ENCODE measurements at regions of chr1 and their contacts with region 1.

Region 1: GRCh38 chr1:156689035-156689952 is 12.1 kb upstream of the NES start:
- DNase-seq: peak; percentile 63 to 84 (median 70)
- H3K4me3 ChIP-seq: no peak overlapping the region
- H3K4me3 Mint-ChIP-seq: peak overlapping the region in 2 of 7 donors; percentile 61 to 76
- H3K27ac ChIP-seq: no peak overlapping the region
- H3K27ac Mint-ChIP-seq: peak overlapping the region in 1 of 8 donors; percentile 83
- H3K4me1 ChIP-seq: peaks cover 7% of the 10 kb centered on the region
- H3K4me1 Mint-ChIP-seq: peaks cover 12 to 33% (median 18%) of the 10 kb centered on the region in 3 donors
- H3K27me3 ChIP-seq: peaks cover 25% of the 10 kb centered on the region
- H3K27me3 Mint-ChIP-seq: peaks cover 46 to 59% of the 10 kb centered on the region in 2 donors

Region 2: DNA sequence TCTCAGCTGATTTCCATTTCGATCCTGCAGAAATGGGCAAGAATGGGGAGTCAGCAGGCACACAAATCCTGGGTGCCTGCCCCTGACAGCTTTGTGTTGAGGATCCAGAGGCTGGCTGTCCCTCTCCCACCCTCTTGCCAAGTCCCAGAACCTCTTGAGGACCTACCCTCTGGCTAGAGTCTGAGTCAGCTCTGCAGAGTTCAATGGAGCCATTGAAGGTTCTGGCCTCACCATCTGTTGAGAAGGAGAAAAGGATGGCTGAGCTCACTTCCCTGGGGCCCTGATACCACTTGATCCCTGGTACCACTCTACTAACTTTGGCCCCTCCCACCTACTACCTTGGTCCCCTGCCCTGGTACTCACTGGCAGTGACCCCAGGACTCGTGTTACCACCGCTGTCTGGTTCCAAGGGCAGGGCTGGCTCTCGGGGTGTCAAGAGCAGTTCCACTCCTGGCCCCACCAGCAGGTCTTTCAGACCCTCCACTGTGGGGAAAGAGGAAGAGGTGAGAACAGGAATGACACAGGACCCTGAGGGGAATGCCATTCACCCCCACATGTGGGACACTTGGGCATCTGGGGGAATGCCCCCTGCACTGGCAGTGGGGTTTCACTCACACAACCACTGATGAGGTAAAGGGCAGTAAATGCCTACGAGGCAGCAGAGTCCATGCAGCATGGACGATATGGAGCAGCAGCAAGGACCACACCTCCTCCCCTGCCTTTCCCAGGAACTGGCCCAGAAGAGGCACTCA is 737.4 kb before region 1 on chr1:
- CTCF ChIA-PET with region 1: no interaction called
- POLR2A ChIA-PET with region 1: no interaction called
- DNase-seq: no peak
- H3K4me3 ChIP-seq: no peak overlapping the region
- H3K4me3 Mint-ChIP-seq: no peak overlapping the region
- H3K27ac ChIP-seq: no peak overlapping the region
- H3K27ac Mint-ChIP-seq: peak overlapping the region in 3 of 8 donors; percentile 6 to 56 (median 46)
- H3K4me1 ChIP-seq: peaks cover 4% of the 10 kb centered on the region
- H3K4me1 Mint-ChIP-seq: peaks cover 4 to 7% (median 5%) of the 10 kb centered on the region in 3 donors
- H3K27me3 ChIP-seq: no peaks in the 10 kb centered on the region
- H3K27me3 Mint-ChIP-seq: no peaks in the 10 kb centered on the region

Region 3: GRCh38 chr1:156659994-156660751 is 29.1 kb before region 1 on chr1:
- CTCF ChIA-PET with region 1: interaction called, 17 read pairs
- POLR2A ChIA-PET with region 1: no interaction called
- DNase-seq: peak; percentile 85 to 92 (median 88)
- H3K4me3 ChIP-seq: peak overlapping the region; percentile 36
- H3K4me3 Mint-ChIP-seq: peak overlapping the region; percentile 24 to 75 (median 62)
- H3K27ac ChIP-seq: peak overlapping the region; percentile 80
- H3K27ac Mint-ChIP-seq: peak overlapping the region; percentile 11 to 86 (median 74)
- H3K4me1 ChIP-seq: peaks cover 58% of the 10 kb centered on the region
- H3K4me1 Mint-ChIP-seq: peaks cover 35 to 60% (median 44%) of the 10 kb centered on the region in 3 donors
- H3K27me3 ChIP-seq: peaks cover 22% of the 10 kb centered on the region
- H3K27me3 Mint-ChIP-seq: peaks cover 17 to 23% of the 10 kb centered on the region in 2 donors

Region 4: DNA sequence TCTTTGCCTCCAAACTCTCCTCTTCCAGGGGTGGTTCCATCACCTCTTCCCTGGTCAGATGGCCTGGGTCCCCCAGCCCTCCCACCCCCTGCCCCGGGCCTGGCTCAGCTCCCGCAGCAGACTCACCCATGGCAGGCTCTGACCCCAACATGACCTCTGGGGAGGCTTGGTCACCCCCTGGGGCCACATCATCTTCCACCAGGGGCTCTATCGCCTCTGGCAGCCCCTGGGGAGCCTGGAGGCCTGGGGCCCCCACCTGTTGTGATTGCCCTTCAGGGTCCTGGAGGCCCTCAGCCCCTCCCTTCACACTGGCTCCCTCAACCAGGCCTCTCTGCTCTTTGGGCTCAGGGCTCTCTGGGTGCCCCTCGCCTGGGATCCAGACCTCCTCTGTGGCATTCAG is 18.5 kb before region 1 on chr1:
- CTCF ChIA-PET with region 1: no interaction called
- POLR2A ChIA-PET with region 1: no interaction called
- DNase-seq: no peak
- H3K4me3 ChIP-seq: no peak overlapping the region
- H3K4me3 Mint-ChIP-seq: no peak overlapping the region
- H3K27ac ChIP-seq: no peak overlapping the region
- H3K27ac Mint-ChIP-seq: no peak overlapping the region
- H3K4me1 ChIP-seq: no peaks in the 10 kb centered on the region
- H3K4me1 Mint-ChIP-seq: no peaks in the 10 kb centered on the region
- H3K27me3 ChIP-seq: peaks cover 3% of the 10 kb centered on the region
- H3K27me3 Mint-ChIP-seq: peaks cover 16 to 32% of the 10 kb centered on the region in 2 donors

Region 5: GRCh38 chr1:156705918-156706656 is 16.8 kb after region 1 on chr1:
- CTCF ChIA-PET with region 1: interaction called, 120 read pairs
- POLR2A ChIA-PET with region 1: interaction called, 6 read pairs
- DNase-seq: peak; percentile 62 to 79 (median 67)
- H3K4me3 ChIP-seq: peak overlapping the region; percentile 92
- H3K4me3 Mint-ChIP-seq: peak overlapping the region; percentile 86 to 95 (median 88)
- H3K27ac ChIP-seq: peak overlapping the region; percentile 43
- H3K27ac Mint-ChIP-seq: peak overlapping the region; percentile 54 to 96 (median 84)
- H3K4me1 ChIP-seq: peaks cover 30% of the 10 kb centered on the region
- H3K4me1 Mint-ChIP-seq: peaks cover 22 to 38% (median 26%) of the 10 kb centered on the region in 3 donors
- H3K27me3 ChIP-seq: peaks cover 9% of the 10 kb centered on the region
- H3K27me3 Mint-ChIP-seq: peaks cover 5 to 13% of the 10 kb centered on the region in 2 donors

Region 6: GRCh38 chr1:156721535-156721934 is 32.2 kb after region 1 on chr1:
- CTCF ChIA-PET with region 1: interaction called, 183 read pairs
- POLR2A ChIA-PET with region 1: interaction called, 4 read pairs
- DNase-seq: no peak
- H3K4me3 ChIP-seq: no peak overlapping the region
- H3K4me3 Mint-ChIP-seq: no peak overlapping the region
- H3K27ac ChIP-seq: no peak overlapping the region
- H3K27ac Mint-ChIP-seq: peak overlapping the region in 2 of 8 donors; percentile 32 to 74
- H3K4me1 ChIP-seq: peaks cover 26% of the 10 kb centered on the region
- H3K4me1 Mint-ChIP-seq: peaks cover 16 to 20% (median 20%) of the 10 kb centered on the region in 3 donors
- H3K27me3 ChIP-seq: no peaks in the 10 kb centered on the region
- H3K27me3 Mint-ChIP-seq: peaks cover 0 to 1% of the 10 kb centered on the region in 2 donors

Region 7: DNA sequence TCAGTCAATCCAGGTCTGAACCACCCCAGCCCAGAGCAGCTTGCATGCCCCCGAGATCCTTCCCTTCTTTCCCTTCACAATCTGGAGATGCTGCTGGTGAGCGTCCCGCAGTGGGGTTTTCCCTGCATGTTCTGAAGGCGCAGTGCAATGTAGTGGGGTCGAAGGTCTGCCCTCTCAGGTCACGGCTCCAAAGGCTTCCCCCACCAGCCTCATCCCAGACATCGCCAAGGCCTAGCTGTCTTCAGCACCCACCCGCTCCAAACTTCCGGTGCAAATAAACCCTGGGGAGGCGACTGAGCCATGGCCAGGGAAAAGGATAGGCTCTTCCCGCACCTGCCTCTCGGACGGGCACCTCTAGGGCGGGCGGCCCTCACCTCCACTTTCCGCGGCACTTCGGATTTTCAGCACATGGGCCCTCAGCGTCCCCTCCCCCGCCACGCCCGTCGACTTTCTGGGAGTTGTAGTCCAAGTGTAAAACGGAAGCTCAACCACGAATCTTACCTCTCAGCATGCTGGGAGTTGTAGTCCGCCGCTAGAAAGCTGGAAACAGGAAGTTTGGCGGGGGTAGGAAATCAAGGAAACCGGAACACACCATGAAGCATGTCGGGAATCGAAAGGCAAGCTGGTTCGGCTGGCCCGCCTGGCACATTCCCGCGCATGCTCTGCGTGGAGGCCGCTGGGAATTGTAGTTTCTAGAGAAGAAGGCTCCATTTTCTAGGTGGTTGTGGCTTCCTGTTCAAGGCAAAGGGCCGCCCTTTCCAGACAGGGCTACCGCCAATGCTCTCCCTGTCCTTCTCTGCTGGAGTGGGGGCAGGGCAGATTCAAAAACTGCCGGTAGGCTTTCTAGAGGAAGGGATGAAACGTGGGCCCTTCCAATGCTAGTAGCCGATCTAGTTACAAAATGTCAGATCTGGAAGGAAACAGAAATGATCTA is 51.7 kb after region 1 on chr1 and contains the start of gene MRPL24:
- CTCF ChIA-PET with region 1: interaction called, 16 read pairs
- POLR2A ChIA-PET with region 1: no interaction called
- DNase-seq: peak; percentile 90 to 99 (median 97)
- H3K4me3 ChIP-seq: peak within 1 kb of the TSS; percentile 76
- H3K4me3 Mint-ChIP-seq: peak within 1 kb of the TSS; percentile 93 to 97 (median 94)
- H3K27ac ChIP-seq: peak within 1 kb of the TSS; percentile 62
- H3K27ac Mint-ChIP-seq: peak within 1 kb of the TSS; percentile 92 to 99 (median 98)
- H3K4me1 ChIP-seq: peaks cover 30% of the 10 kb centered on the region
- H3K4me1 Mint-ChIP-seq: peaks cover 27 to 41% (median 41%) of the 10 kb centered on the region in 3 donors
- H3K27me3 ChIP-seq: no peaks in the 10 kb centered on the region
- H3K27me3 Mint-ChIP-seq: no peaks in the 10 kb centered on the region
- total RNA-seq, gene MRPL24: 122 to 131 TPM

Region 8: DNA sequence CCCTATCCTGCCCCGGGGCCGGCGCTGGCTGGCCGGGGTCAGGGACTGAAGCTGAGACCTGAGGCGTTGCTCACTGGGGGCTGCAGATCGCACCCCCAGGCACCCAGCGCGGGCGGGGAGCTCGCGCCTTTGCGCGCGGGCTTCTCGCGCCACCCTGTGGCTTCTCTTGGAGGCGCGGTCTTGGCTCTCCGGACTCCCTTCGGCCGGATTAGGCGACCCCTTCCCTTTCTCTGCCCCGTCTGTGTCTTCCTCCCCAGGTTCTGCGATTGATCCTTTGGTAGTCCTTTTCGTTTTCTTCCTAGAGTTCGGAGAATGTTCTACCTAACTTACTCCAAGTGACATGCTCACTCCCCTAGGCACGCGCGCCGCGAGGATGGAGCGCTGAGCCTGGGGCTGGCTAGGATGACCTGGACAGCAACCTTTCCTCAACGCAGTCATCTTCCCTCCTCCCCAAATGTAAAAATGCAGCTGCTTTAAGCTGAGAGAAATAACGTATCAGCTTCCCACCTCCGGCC is 170.9 kb after region 1 on chr1:
- CTCF ChIA-PET with region 1: interaction called, 46 read pairs
- POLR2A ChIA-PET with region 1: no interaction called
- DNase-seq: peak; percentile 46 to 71 (median 49)
- H3K4me3 ChIP-seq: peak overlapping the region; percentile 64
- H3K4me3 Mint-ChIP-seq: peak overlapping the region; percentile 74 to 90 (median 81)
- H3K27ac ChIP-seq: no peak overlapping the region
- H3K27ac Mint-ChIP-seq: peak overlapping the region in 4 of 8 donors; percentile 7 to 85 (median 33)
- H3K4me1 ChIP-seq: peaks cover 21% of the 10 kb centered on the region
- H3K4me1 Mint-ChIP-seq: peaks cover 14 to 36% (median 19%) of the 10 kb centered on the region in 3 donors
- H3K27me3 ChIP-seq: peaks cover 40% of the 10 kb centered on the region
- H3K27me3 Mint-ChIP-seq: peaks cover 41 to 61% of the 10 kb centered on the region in 2 donors

Region 9: DNA sequence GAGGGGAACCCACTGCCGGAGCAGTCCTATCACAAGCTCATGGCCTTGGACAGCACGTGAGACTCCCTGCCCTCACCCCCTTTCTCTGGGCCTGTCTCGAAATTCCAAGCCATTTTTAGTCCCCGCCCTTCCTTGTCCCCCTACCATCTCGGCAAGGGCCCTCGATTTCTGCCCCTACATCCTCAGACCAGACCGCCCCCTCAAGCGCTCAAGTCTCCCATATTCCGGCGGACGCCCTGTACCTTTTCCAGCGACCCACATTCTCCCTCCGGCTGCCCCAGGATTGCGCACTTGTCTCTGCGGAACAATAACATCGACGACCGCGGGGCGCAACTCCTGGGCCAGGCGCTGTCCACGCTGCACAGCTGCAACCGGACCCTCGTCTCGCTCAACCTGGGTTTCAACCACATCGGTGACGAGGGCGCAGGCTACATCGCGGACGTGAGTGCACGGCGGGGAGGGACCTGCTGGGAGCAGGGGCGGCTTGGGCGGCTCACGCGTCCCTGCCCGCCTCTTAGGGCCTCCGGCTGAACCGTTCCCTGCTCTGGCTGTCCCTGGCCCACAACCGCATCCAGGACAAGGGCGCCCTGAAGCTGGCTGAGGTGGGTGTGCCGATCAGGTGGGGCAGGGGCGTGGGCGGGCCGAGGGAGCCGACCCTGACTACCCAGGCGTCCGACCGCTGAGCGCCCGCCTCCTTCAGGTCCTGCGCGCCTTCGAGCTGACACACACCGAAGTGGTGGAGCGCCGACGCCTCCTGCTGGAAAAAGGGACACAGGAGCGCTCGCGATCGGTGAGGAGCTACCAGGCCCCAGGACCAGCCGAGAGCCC is 238.1 kb after region 1 on chr1:
- CTCF ChIA-PET with region 1: interaction called, 10 read pairs
- POLR2A ChIA-PET with region 1: no interaction called
- DNase-seq: peak; percentile 35 to 70 (median 43)
- H3K4me3 ChIP-seq: no peak overlapping the region
- H3K4me3 Mint-ChIP-seq: peak overlapping the region in 4 of 7 donors; percentile 15 to 50 (median 29)
- H3K27ac ChIP-seq: no peak overlapping the region
- H3K27ac Mint-ChIP-seq: peak overlapping the region in 1 of 8 donors; percentile 56
- H3K4me1 ChIP-seq: peaks cover 7% of the 10 kb centered on the region
- H3K4me1 Mint-ChIP-seq: peaks cover 12 to 38% (median 13%) of the 10 kb centered on the region in 3 donors
- H3K27me3 ChIP-seq: peaks cover 31% of the 10 kb centered on the region
- H3K27me3 Mint-ChIP-seq: peaks cover 71 to 90% of the 10 kb centered on the region in 2 donors